Activated T-helper 2 cell treated with anti-CD3 and anti-CD28 coated beads, Interferon-gamma antibody, Interleukin-2, Interleukin-4, amounts not matched to agents 10 μg/mL and 5 μg/mL and 100 μg/mL, durations not matched to agents 14 hours and 24 hours and 36 hours (primary cell): ENCODE measurements at regions of chr11 and their contacts with region 1.

Region 1: DNA sequence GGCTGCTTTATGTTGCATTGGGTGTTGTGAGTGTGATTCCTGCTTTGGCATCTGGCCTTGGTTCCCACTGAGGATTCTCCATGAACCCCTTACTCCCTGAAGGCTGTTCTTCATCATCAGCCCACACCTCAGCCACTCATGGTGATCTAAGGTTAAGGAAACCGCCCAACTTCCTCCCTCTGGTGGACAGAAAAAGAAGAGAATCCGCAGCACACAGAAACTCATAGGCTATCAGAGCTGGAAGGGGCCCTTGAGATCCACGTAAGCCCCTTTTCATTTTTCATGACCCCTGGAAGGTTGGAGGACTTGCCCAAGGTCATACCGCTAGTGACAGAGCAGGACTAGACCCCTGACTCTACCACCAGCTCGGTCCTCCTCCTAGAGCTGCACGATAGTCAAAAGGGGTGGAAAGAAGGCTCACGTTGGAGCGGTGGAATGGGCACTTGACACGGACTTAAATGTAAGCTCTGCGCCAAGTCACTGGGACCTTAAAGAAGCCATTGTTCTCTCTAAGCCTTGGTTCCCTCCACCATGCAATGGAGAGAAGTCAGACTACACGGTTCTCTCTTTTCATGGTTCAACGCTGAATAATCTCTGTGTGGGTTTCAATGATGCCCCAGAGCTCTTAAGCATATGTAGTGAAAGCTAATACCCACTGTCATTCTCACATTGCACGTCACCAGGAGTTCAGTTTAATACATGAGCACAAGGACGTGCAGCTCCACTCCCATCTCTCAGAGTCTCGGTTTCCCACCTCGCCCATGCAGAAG is 83.6 kb upstream of the CRTAM start:
- DNase-seq: peak; percentile 21
- H3K4me3 Mint-ChIP-seq: no peak overlapping the region
- H3K27ac Mint-ChIP-seq: no peak overlapping the region
- H3K4me1 Mint-ChIP-seq: peaks cover 44% of the 10 kb centered on the region
- H3K27me3 Mint-ChIP-seq: peaks cover 7% of the 10 kb centered on the region

Region 2: GRCh38 chr11:122775675-122776271 is 21.0 kb after region 1 on chr11:
- intact Hi-C with region 1: loop called (anchors 2 kb)
- DNase-seq: no peak
- H3K4me3 Mint-ChIP-seq: no peak overlapping the region
- H3K27ac Mint-ChIP-seq: no peak overlapping the region
- H3K4me1 Mint-ChIP-seq: peaks cover 14% of the 10 kb centered on the region
- H3K27me3 Mint-ChIP-seq: peaks cover 8% of the 10 kb centered on the region